ENCODE measurements at regions of chr5 and their contacts with region 1.

Region 1: GRCh38 chr5:134784241-134784920 is 25.8 kb downstream of the DDX46 start:
- DNase-seq: no peak
- H3K4me3 ChIP-seq: no peak overlapping the region
- H3K27ac ChIP-seq: no peak overlapping the region
- H3K4me1 ChIP-seq: no peaks in the 10 kb centered on the region
- H3K27me3 ChIP-seq: no peaks in the 10 kb centered on the region
- CTCF ChIP-seq: no peak

Region 2: DNA sequence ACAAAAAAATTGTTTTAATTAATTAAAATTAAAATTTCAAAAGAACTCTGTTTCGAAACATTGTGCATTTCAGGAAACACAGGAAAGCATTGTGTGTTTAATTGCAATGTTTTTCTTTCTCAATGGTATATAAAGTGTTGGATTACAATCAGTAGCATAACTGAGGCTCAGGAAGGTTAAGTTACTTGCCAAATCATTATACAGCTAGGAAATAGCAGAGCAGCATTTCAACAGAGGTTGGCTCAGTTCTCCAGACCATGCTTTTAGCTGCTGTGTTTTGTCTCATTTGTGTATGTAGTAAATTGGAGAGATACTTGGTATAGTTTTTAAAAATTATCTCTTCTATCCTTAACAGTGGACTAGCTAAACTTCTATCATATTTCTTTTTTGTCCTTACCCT is 76.1 kb before region 1 on chr5:
- intact Hi-C with region 1: loop called (anchors 10 kb)
- DNase-seq: no peak
- H3K4me3 ChIP-seq: no peak overlapping the region
- H3K27ac ChIP-seq: no peak overlapping the region
- H3K4me1 ChIP-seq: no peaks in the 10 kb centered on the region
- H3K27me3 ChIP-seq: no peaks in the 10 kb centered on the region
- CTCF ChIP-seq: no peak

Region 3: GRCh38 chr5:135106610-135107471 is 322.5 kb after region 1 on chr5:
- intact Hi-C with region 1: no loop called
- DNase-seq: no peak
- H3K4me3 ChIP-seq: no peak overlapping the region
- H3K27ac ChIP-seq: no peak overlapping the region
- H3K4me1 ChIP-seq: no peaks in the 10 kb centered on the region
- H3K27me3 ChIP-seq: peaks cover 74% of the 10 kb centered on the region
- CTCF ChIP-seq: no peak

Measured in left ventricle myocardium inferior (tissue), 1 donor.